Esophagus muscularis mucosa (tissue), 4 donors: ENCODE measurements at regions of chr18 and their contacts with region 1.

Region 1: GRCh38 chr18:35267809-35268208 is 22.2 kb downstream of the ZSCAN30 start:
- DNase-seq: no peak
- H3K4me3 ChIP-seq: peak overlapping the region; percentile 70 to 94 (median 73)
- H3K27ac ChIP-seq: peak overlapping the region; percentile 85 to 89 (median 87)
- H3K4me1 ChIP-seq: peaks cover 6 to 12% (median 10%) of the 10 kb centered on the region in 4 donors
- H3K27me3 ChIP-seq: no peaks in the 10 kb centered on the region
- CTCF ChIP-seq: no peak
- EP300 ChIP-seq: no peak
- POLR2A ChIP-seq: no peak

Region 2: GRCh38 chr18:35290073-35290735 is 22.4 kb after region 1 on chr18 and contains the start of gene ZSCAN30:
- intact Hi-C with region 1: loop called (anchors 2 kb)
- DNase-seq: peak; percentile 98
- H3K4me3 ChIP-seq: peak within 1 kb of the TSS; percentile 62 to 84 (median 74)
- H3K27ac ChIP-seq: peak within 1 kb of the TSS; percentile 79 to 89 (median 84)
- H3K4me1 ChIP-seq: peaks cover 14 to 39% (median 34%) of the 10 kb centered on the region in 4 donors
- H3K27me3 ChIP-seq: no peaks in the 10 kb centered on the region
- CTCF ChIP-seq: no peak
- EP300 ChIP-seq: no peak
- POLR2A ChIP-seq: no peak
- total RNA-seq, gene ZSCAN30: 8.6 to 14.2 (median 10.2) TPM